Activated CD4-positive, alpha-beta memory T cell treated with anti-CD3 and anti-CD28 coated beads for 36 hours (primary cell): ENCODE measurements at regions of chr15 and their contacts with region 1.

Region 1: DNA sequence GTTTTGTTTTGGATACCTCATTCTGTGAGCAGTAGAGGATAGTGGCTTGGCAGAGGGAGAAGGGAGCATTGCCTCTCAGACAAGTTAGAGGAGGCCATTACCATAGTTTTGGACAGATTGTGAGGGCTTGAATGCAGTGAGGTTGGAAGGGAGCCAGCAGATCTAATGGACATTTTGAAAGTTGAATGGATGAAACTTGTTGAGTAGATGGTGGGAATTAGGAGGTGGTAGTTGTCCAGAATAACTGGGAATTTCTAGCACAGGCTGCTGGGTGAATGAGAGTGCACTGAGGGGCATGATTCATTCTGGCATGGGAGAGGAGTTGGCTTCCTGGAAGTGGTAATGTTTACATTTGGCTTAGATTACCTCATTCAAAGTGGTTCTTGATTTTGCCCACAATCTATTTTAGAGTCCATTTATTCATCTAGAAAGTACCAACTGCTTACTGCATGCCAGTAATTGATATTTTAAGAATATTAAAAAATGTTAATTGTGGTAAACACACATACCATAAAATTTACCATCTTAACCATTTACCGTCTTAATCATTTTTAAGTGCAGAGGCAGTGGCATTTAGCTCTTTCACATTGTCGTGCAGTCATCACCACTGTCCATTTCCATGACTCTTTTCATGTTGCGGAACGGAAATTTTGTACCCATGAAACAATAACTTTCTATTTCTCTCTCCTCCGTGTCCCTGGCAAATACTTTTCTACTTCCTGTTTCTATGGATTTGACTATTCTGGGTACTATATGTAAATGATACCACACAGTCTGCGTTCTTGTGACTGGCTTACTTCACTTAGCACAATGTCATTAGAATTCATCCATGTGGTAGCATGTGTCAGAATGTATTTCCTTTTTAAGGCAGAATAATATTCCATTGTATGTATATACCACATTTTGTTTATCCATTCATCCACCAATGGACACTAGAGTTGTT is 27.7 kb downstream of the AKAP13 start:
- DNase-seq: peak; percentile 64
- H3K4me3 Mint-ChIP-seq: peak overlapping the region; percentile 53
- H3K27ac Mint-ChIP-seq: peak overlapping the region; percentile 91
- H3K4me1 Mint-ChIP-seq: peaks cover 81% of the 10 kb centered on the region
- H3K27me3 Mint-ChIP-seq: no peaks in the 10 kb centered on the region

Region 2: DNA sequence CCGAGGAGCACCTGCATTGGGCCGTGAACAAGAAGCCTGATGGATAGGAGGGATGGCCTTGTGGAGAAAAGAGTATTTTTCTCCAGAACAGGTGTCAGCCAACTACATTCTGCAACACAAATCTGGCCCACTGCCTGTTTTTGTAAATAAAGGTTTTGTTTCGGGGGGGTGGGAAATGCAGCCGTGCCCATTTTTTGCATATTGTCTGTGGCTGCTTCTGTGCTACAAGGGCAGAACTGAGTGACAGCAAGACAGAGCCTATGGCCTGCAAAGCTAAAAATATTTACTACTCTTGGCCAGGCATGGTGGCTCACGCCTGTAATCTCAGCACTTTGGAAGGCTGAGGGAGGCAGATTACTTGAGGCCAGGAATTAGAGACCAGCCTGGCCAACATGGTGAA is 123.6 kb before region 1 on chr15:
- CTCF ChIA-PET with region 1: no interaction called
- POLR2A ChIA-PET with region 1: no interaction called
- intact Hi-C with region 1: no loop called
- DNase-seq: no peak
- H3K4me3 Mint-ChIP-seq: no peak overlapping the region
- H3K27ac Mint-ChIP-seq: no peak overlapping the region
- H3K4me1 Mint-ChIP-seq: peaks cover 5% of the 10 kb centered on the region
- H3K27me3 Mint-ChIP-seq: no peaks in the 10 kb centered on the region

Region 3: GRCh38 chr15:85318048-85318731 is 89.9 kb before region 1 on chr15:
- CTCF ChIA-PET with region 1: interaction called, 24 read pairs
- POLR2A ChIA-PET with region 1: no interaction called
- intact Hi-C with region 1: loop called (anchors 1 kb)
- DNase-seq: peak; percentile 50
- H3K4me3 Mint-ChIP-seq: no peak overlapping the region
- H3K27ac Mint-ChIP-seq: peak overlapping the region; percentile 28
- H3K4me1 Mint-ChIP-seq: peaks cover 49% of the 10 kb centered on the region
- H3K27me3 Mint-ChIP-seq: no peaks in the 10 kb centered on the region

Region 4: GRCh38 chr15:85354461-85354860 is 53.6 kb before region 1 on chr15:
- CTCF ChIA-PET with region 1: no interaction called
- POLR2A ChIA-PET with region 1: no interaction called
- intact Hi-C with region 1: loop called (anchors 1 kb)
- DNase-seq: no peak
- H3K4me3 Mint-ChIP-seq: no peak overlapping the region
- H3K27ac Mint-ChIP-seq: no peak overlapping the region
- H3K4me1 Mint-ChIP-seq: peaks cover 15% of the 10 kb centered on the region
- H3K27me3 Mint-ChIP-seq: no peaks in the 10 kb centered on the region

Region 5: GRCh38 chr15:85563328-85563727 is 155.3 kb after region 1 on chr15:
- CTCF ChIA-PET with region 1: no interaction called
- POLR2A ChIA-PET with region 1: no interaction called
- intact Hi-C with region 1: no loop called
- DNase-seq: no peak
- H3K4me3 Mint-ChIP-seq: no peak overlapping the region
- H3K27ac Mint-ChIP-seq: no peak overlapping the region
- H3K4me1 Mint-ChIP-seq: peaks cover 25% of the 10 kb centered on the region
- H3K27me3 Mint-ChIP-seq: no peaks in the 10 kb centered on the region